ENCODE measurements at regions of chr1 and their contacts with region 1.

Region 1: DNA sequence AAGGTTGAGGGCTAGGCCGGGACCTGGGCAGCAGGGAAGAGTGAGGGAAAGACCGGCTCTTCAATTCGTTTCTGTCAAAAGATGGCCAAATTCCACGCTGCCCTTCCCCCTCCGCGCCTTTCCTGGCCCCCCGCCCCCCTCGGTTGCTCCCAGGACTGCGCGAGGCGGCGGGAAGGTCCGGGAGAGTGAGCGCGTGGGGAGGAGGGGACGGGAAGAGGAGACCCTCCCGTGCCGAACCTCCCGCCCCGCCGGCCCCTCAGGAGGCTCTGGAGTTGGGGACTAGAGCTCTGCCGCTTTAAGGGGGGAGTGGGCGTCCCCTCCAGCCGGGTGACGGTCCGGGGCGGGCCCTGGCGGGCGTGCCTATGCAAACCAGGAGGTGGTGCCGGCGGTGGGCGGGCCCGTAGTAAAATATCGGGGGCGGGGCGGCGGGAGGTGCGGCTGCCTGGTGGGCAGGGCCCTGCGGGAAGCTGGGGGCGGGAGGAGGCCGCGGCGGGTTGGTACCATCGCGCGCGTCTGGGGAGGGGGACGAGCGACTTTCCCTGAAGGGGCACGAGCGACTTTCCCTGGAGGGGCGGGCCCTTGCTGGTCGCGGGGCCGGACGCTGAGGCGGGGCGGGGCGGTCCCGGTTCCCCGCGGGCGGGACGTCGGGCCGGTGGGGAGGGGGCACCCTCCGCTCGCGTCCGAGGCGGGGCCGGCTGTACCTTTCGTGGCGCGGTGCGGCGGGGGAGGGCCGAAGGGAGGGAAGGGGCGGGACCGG is 58.2 kb downstream of the BCL9 start:
- DNase-seq: peak; percentile 98 to 99 (median 98)
- ATAC-seq: peak; percentile 89 to 96 (median 95)
- H3K4me3 ChIP-seq: peak overlapping the region; percentile 62 to 99 (median 78)
- H3K27ac ChIP-seq: peak overlapping the region; percentile 62 to 97 (median 90)
- H3K4me1 ChIP-seq: peaks cover 0 to 34% (median 16%) of the 10 kb centered on the region in 12 donors
- H3K27me3 ChIP-seq: no peaks in the 10 kb centered on the region
- CTCF ChIP-seq: no peak
- POLR2A ChIP-seq: peak; percentile 91 to 98

Region 2: DNA sequence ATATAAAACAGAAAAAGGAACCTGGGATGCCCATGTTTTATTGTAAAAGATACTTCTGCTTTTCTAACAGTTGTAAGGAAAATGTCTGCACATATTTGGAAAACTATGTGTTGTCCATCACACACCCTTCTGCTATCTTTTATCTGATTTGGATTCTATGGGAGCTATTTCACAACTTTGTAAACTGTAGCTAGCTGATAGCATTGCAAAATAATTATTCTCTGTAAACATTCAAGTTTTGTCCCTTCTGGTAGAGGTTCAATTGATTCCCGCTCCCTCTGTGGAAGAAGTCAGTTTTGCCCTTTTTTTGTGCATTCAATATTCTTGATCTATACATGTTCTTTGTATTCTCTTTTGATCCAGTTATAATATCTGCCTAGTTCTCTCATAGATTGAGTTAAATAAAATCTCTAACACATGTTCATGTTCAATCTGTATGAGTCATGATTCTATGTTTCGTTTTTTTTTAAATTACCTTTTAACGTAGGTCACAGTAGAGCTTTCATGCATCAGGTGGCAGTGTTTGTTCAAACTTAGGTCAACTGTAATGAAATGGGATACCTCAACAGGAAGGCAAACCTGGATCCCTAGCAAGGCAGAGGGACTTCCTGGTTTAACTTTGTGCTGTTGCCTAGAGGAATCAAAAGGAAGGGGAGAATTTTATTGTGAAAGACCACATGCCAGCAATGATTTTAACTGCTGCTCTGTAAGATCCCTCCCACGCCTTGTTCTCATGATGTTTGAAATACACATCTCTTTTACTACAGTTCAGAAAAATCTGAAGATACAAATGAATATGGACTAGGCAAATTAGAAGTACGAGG is 84.3 kb before region 1 on chr1:
- intact Hi-C with region 1: no loop called
- DNase-seq: no peak
- ATAC-seq: peak; percentile 55 to 87 (median 78)
- H3K4me3 ChIP-seq: no peak overlapping the region
- H3K27ac ChIP-seq: peak overlapping the region in 11 of 12 donors; percentile 2 to 81 (median 52)
- H3K4me1 ChIP-seq: peaks cover 0 to 42% (median 20%) of the 10 kb centered on the region in 12 donors
- H3K27me3 ChIP-seq: no peaks in the 10 kb centered on the region
- CTCF ChIP-seq: peak in 7 of 12 donors; percentile 25 to 50 (median 41)
- POLR2A ChIP-seq: no peak

Region 3: GRCh38 chr1:147579934-147580537 is 19.5 kb before region 1 on chr1:
- intact Hi-C with region 1: loop called in 1 of 10 experiments (anchors 2 kb)
- DNase-seq: no peak
- ATAC-seq: no peak
- H3K4me3 ChIP-seq: no peak overlapping the region
- H3K27ac ChIP-seq: no peak overlapping the region
- H3K4me1 ChIP-seq: peaks cover 0 to 27% (median 12%) of the 10 kb centered on the region in 12 donors
- H3K27me3 ChIP-seq: peaks cover 0 to 29% (median 0%) of the 10 kb centered on the region in 9 donors
- CTCF ChIP-seq: no peak
- POLR2A ChIP-seq: no peak

Measured in heart left ventricle (tissue), 16 donors.